ENCODE measurements at regions of chrX and their contacts with region 1.

Region 1: DNA sequence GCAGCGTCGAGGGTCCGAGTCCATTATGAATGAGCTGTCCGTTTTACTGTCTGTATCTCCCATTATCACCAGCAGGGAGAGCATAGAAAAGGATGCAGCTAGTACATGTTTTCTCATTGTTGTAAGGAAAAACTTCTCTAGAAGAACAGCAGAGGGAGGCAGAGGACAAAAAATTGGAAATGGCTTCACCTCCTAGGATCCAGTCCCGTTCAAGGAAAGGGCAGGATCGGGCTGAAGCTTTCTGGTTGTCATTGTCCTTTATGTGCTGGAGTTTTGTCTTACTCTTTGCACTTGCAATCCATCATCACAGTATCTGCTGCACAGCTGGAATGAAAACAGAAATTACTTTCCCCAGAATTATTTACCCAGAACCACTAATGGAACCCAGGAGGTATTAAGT is 14.7 kb downstream of the NDP start:
- DNase-seq: peak; percentile 38 to 62 (median 46)
- H3K4me3 ChIP-seq: no peak overlapping the region
- H3K27ac ChIP-seq: no peak overlapping the region
- H3K4me1 ChIP-seq: no peaks in the 10 kb centered on the region
- H3K27me3 ChIP-seq: peaks cover 30% of the 10 kb centered on the region
- CTCF ChIP-seq: peak; percentile 55 to 93 (median 91)
- POLR2A ChIP-seq: no peak

Region 2: DNA sequence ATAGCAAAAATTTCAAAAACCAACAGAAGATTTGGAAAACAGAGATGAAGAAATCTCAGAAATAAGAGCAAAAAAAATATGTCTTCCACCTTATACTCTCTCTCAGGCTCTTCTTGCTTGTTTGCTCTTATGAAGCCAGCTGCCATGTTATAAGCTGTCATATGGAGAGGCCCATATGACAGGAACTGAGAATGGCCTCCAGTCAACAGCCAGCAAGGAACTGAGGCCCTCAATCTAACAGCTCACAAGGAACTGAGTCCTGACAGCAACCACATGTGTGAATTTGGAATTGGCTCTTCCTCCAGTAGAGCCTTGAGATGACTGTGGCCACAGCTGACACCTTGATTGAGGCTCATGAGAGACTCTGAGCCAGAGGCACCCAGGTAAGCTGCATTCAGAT is 353.8 kb before region 1 on chrX:
- intact Hi-C with region 1: no loop called
- DNase-seq: no peak
- H3K4me3 ChIP-seq: no peak overlapping the region
- H3K27ac ChIP-seq: no peak overlapping the region
- H3K4me1 ChIP-seq: no peaks in the 10 kb centered on the region
- H3K27me3 ChIP-seq: no peaks in the 10 kb centered on the region
- CTCF ChIP-seq: no peak
- POLR2A ChIP-seq: no peak

Region 3: DNA sequence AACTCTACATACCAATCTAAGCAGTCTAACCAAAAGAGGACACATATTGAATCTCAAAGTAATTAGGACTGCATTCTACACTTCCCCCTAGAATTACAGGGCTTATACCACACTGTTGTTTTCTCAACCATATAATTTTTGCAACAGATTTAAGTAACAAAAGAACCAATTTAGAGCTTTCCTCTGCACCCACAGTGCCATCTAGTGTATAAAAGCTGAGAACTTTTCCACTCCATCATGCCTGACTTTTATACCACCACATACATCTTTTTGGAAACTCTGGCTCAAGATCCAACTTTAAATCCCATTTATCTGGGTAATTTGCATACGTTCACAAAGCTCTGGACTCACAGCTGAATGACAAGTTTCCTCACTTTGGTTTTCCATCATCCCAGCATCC is 285.5 kb after region 1 on chrX:
- intact Hi-C with region 1: loop called (anchors 5 to 10 kb)
- DNase-seq: peak in 1 of 7 donors; percentile 5
- H3K4me3 ChIP-seq: no peak overlapping the region
- H3K27ac ChIP-seq: no peak overlapping the region
- H3K4me1 ChIP-seq: no peaks in the 10 kb centered on the region
- H3K27me3 ChIP-seq: peaks cover 43% of the 10 kb centered on the region
- CTCF ChIP-seq: peak; percentile 32 to 61 (median 56)
- POLR2A ChIP-seq: no peak